Gastrocnemius medialis (tissue), 4 donors: ENCODE measurements at regions of chr10 and their contacts with region 1.

Region 1: GRCh38 chr10:15824498-15824897 is 35.8 kb downstream of the MINDY3 start:
- DNase-seq: no peak
- ATAC-seq: no peak
- H3K4me3 ChIP-seq: no peak overlapping the region
- H3K27ac ChIP-seq: no peak overlapping the region
- H3K4me1 ChIP-seq: no peaks in the 10 kb centered on the region
- H3K27me3 ChIP-seq: no peaks in the 10 kb centered on the region
- CTCF ChIP-seq: peak; percentile 39 to 59 (median 55)
- POLR2A ChIP-seq: no peak

Region 2: GRCh38 chr10:15433850-15434537 is 390.5 kb before region 1 on chr10:
- in situ Hi-C with region 1: loop called (anchors 5 to 25 kb)
- intact Hi-C with region 1: loop called (anchors 2 kb)
- DNase-seq: no peak
- ATAC-seq: peak; percentile 70 to 86
- H3K4me3 ChIP-seq: peak overlapping the region; percentile 39 to 50 (median 41)
- H3K27ac ChIP-seq: no peak overlapping the region
- H3K4me1 ChIP-seq: peaks cover 0 to 4% of the 10 kb centered on the region in 2 donors
- H3K27me3 ChIP-seq: no peaks in the 10 kb centered on the region
- CTCF ChIP-seq: peak; percentile 32 to 70 (median 57)
- POLR2A ChIP-seq: no peak

Region 3: GRCh38 chr10:15439341-15439842 is 385.1 kb before region 1 on chr10:
- in situ Hi-C with region 1: loop called (anchors 5 to 25 kb)
- intact Hi-C with region 1: loop called (anchors 2 kb)
- DNase-seq: no peak
- ATAC-seq: peak; percentile 51 to 62
- H3K4me3 ChIP-seq: peak overlapping the region; percentile 27 to 44 (median 36)
- H3K27ac ChIP-seq: peak overlapping the region in 2 of 4 donors; percentile 33 to 48
- H3K4me1 ChIP-seq: peaks cover 0 to 4% of the 10 kb centered on the region in 2 donors
- H3K27me3 ChIP-seq: no peaks in the 10 kb centered on the region
- CTCF ChIP-seq: peak in 1 of 5 experiments; percentile 12
- POLR2A ChIP-seq: no peak

Region 4: GRCh38 chr10:15585303-15585715 is 239.2 kb before region 1 on chr10:
- in situ Hi-C with region 1: no loop called
- intact Hi-C with region 1: loop called (anchors 10 kb)
- DNase-seq: peak in 1 of 2 donors; percentile 3
- ATAC-seq: no peak
- H3K4me3 ChIP-seq: no peak overlapping the region
- H3K27ac ChIP-seq: no peak overlapping the region
- H3K4me1 ChIP-seq: no peaks in the 10 kb centered on the region
- H3K27me3 ChIP-seq: no peaks in the 10 kb centered on the region
- CTCF ChIP-seq: peak; percentile 29 to 66 (median 47)
- POLR2A ChIP-seq: no peak

Region 5: DNA sequence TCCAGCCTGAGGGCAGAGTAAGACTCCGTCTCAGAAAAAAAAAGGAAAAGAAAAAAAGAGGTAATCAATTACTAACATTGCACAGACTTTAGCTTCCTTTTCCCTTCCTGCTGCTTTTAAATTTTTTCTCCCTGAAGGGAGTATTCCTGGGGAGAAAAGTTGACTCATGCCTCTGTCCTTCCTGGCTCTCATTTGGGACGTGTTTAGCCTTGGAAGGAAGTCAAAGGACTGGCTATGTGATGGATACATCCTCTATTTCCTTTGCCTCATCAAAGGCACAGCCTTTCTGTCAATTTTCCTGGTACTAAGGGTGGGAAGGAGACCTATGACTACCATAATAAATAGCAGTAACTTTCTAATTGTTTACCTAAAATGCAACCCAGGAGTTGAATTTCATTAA is 182.4 kb before region 1 on chr10:
- in situ Hi-C with region 1: loop called in 1 of 4 experiments (anchors 10 kb)
- intact Hi-C with region 1: loop called (anchors 10 kb)
- DNase-seq: no peak
- ATAC-seq: no peak
- H3K4me3 ChIP-seq: no peak overlapping the region
- H3K27ac ChIP-seq: no peak overlapping the region
- H3K4me1 ChIP-seq: no peaks in the 10 kb centered on the region
- H3K27me3 ChIP-seq: no peaks in the 10 kb centered on the region
- CTCF ChIP-seq: no peak
- POLR2A ChIP-seq: no peak

Region 6: DNA sequence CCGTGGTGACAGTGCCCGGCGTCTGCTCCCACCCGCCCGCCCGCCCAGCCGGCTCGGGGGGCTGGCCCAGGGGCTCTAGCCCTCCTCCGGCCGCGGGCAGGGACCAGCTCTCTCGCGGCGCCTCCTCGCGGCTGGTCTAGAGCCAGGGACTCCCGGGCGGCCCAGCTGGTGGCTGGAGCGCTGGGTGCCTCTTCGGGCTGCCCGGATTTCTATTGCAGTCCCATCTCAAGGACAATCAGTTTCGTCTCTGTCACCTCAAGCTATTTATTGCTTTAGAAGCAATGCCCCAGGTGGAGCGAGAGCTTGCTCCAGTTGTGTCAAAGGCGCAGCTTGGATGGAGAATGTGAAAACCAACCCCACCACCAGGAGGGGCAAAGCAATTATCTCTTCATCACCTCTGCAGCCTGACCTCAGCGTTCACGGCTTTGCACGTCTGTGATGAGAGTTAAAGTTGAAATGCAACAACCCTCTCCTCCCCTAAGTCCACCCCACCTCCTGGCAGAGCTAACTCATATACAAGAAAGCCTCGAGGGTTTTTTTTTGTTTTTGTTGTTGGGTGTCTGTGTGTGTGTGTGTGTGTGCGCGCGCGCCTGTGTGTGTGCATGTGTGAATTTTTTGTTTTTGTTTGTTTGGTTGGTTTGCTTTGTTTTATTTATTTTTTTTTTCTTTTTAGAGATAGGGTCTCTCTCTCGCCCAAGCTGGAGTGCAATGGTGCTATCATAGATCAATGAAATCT is 104.4 kb before region 1 on chr10 and contains the start of gene ITGA8:
- in situ Hi-C with region 1: loop called in 2 of 4 experiments (anchors 5 kb)
- intact Hi-C with region 1: no loop called
- DNase-seq: no peak
- ATAC-seq: peak; percentile 41 to 49
- H3K4me3 ChIP-seq: peak within 1 kb of the TSS; percentile 39 to 53 (median 50)
- H3K27ac ChIP-seq: peak within 1 kb of the TSS in 2 of 4 donors; percentile 34 to 67
- H3K4me1 ChIP-seq: no peaks in the 10 kb centered on the region
- H3K27me3 ChIP-seq: peaks cover 10 to 31% (median 11%) of the 10 kb centered on the region in 3 donors
- CTCF ChIP-seq: peak in 2 of 5 experiments; percentile 10 to 29
- POLR2A ChIP-seq: no peak
- total RNA-seq, gene ITGA8: 1.6 to 17.4 (median 10.3) TPM

Region 7: GRCh38 chr10:15879058-15879457 is 54.6 kb after region 1 on chr10:
- in situ Hi-C with region 1: no loop called
- intact Hi-C with region 1: no loop called
- DNase-seq: no peak
- ATAC-seq: no peak
- H3K4me3 ChIP-seq: no peak overlapping the region
- H3K27ac ChIP-seq: no peak overlapping the region
- H3K4me1 ChIP-seq: no peaks in the 10 kb centered on the region
- H3K27me3 ChIP-seq: peaks cover 0 to 7% (median 3%) of the 10 kb centered on the region in 3 donors
- CTCF ChIP-seq: peak in 4 of 5 experiments; percentile 23 to 46 (median 36)
- POLR2A ChIP-seq: no peak